ENCODE measurements at regions of chr2 and their contacts with region 1.

Region 1: DNA sequence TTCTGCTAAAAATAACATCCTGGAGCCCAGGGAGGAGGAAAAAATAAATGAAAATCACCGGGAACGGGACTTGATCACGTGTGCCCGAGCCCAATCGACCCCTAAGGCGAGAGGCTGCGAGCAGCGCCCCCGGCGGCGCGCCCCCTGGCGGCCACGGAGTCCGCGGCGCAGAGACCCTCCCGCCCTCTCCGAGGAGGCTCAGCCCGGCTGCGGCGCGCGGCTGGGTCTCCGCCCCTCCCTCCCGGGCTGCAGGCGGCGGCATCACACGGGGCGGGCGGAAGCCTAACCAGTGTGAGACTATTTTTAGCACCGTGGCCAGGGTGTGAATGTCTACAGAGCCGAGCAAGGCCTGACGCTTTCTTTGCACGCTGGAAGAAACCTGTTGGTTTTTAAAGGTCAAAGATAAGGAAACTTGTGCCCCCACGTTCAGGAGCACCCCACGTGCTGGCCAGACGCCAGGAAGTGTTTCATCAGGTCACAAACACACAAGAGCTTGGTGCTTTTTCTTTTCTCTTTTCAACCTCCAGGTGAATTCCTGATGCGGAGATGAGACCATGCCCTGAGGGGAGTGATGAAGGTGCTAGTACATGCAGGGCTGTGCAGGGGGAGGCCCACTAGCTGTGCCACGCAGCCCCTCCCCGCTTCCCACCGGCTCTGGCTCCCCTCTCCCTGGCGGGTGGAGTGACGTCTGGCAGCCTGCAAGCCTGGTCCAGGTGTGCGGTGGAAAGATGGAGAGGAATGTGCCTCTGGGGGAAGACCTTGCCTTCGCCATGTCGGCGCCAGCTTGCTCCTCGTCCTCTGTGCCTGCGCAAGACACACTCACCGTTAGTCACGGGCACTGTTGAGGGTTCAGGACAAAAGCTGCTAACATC is 35.3 kb upstream of the DNMT3A start:
- DNase-seq: peak; percentile 90
- ATAC-seq: peak; percentile 98
- H3K4me3 Mint-ChIP-seq: peak overlapping the region; percentile 73
- H3K27ac Mint-ChIP-seq: peak overlapping the region; percentile 90
- H3K4me1 Mint-ChIP-seq: peaks cover 35% of the 10 kb centered on the region
- H3K27me3 Mint-ChIP-seq: no peaks in the 10 kb centered on the region
- CTCF ChIP-seq: no peak

Region 2: DNA sequence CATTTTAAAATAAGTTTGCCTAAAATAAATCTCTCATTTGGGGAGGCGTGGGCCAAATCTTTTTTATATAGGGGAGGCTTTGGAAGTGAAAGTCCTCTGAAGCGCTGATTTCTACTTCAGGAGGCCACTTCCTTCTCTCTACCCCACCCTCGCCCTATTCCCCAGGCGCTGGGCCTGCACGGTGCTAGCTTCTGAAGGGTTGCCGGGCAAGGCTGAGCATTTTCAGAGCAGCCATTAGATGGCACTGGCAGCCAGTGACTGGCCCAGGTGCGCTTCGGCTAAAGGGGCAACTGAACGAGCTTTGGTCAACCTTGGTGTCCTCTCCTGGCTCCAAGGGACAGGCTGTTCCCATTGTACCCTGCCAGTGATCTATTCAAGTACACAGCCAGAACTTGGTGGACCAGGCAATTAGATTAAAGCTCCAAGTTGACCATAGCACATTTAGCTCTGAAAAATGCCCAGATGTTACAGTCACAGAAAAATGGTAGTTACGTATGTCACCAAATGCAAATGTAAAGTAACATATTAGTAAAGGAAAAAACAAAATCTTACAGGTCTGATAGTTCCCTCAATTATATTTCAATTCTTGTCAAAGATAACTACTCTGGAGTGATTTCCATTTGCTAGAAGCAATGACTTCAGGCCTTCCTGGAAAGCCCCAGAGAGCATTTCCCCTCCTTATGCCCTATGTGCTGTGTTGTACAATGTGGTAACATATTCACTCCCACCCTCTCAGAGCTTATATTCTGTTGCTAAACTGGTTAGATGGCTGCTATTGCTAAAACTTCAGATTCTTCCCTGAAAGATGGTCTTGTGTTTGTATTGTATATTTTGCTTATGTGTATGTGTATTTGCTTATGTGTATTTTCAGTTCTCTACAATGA is 210.8 kb before region 1 on chr2:
- CTCF ChIA-PET with region 1: interaction called, 7 read pairs
- POLR2A ChIA-PET with region 1: no interaction called
- intact Hi-C with region 1: loop called (anchors 1 kb)
- DNase-seq: peak; percentile 71
- ATAC-seq: peak; percentile 95
- H3K4me3 Mint-ChIP-seq: peak overlapping the region; percentile 38
- H3K27ac Mint-ChIP-seq: peak overlapping the region; percentile 65
- H3K4me1 Mint-ChIP-seq: peaks cover 33% of the 10 kb centered on the region
- H3K27me3 Mint-ChIP-seq: peaks cover 23% of the 10 kb centered on the region
- CTCF ChIP-seq: peak; percentile 20

Region 3: GRCh38 chr2:25309402-25309801 is 67.6 kb before region 1 on chr2:
- CTCF ChIA-PET with region 1: interaction called, 4 read pairs
- POLR2A ChIA-PET with region 1: no interaction called
- intact Hi-C with region 1: loop called (anchors 2 kb)
- DNase-seq: peak; percentile 46
- ATAC-seq: peak; percentile 71
- H3K4me3 Mint-ChIP-seq: no peak overlapping the region
- H3K27ac Mint-ChIP-seq: no peak overlapping the region
- H3K4me1 Mint-ChIP-seq: peaks cover 16% of the 10 kb centered on the region
- H3K27me3 Mint-ChIP-seq: no peaks in the 10 kb centered on the region
- CTCF ChIP-seq: no peak

Region 4: GRCh38 chr2:25388491-25388890 is 11.5 kb after region 1 on chr2:
- CTCF ChIA-PET with region 1: interaction called, 5 read pairs
- POLR2A ChIA-PET with region 1: interaction called, 20 read pairs
- intact Hi-C with region 1: loop called (anchors 1 kb)
- DNase-seq: no peak
- ATAC-seq: peak; percentile 90
- H3K4me3 Mint-ChIP-seq: peak overlapping the region; percentile 75
- H3K27ac Mint-ChIP-seq: peak overlapping the region; percentile 74
- H3K4me1 Mint-ChIP-seq: peaks cover 30% of the 10 kb centered on the region
- H3K27me3 Mint-ChIP-seq: no peaks in the 10 kb centered on the region
- CTCF ChIP-seq: no peak

Region 5: GRCh38 chr2:25411281-25411680 is 34.3 kb after region 1 on chr2:
- CTCF ChIA-PET with region 1: interaction called, 9 read pairs
- POLR2A ChIA-PET with region 1: interaction called, 23 read pairs
- intact Hi-C with region 1: no loop called
- DNase-seq: no peak
- ATAC-seq: peak; percentile 50
- H3K4me3 Mint-ChIP-seq: peak overlapping the region; percentile 71
- H3K27ac Mint-ChIP-seq: peak overlapping the region; percentile 87
- H3K4me1 Mint-ChIP-seq: peaks cover 71% of the 10 kb centered on the region
- H3K27me3 Mint-ChIP-seq: no peaks in the 10 kb centered on the region
- CTCF ChIP-seq: no peak

Region 6: DNA sequence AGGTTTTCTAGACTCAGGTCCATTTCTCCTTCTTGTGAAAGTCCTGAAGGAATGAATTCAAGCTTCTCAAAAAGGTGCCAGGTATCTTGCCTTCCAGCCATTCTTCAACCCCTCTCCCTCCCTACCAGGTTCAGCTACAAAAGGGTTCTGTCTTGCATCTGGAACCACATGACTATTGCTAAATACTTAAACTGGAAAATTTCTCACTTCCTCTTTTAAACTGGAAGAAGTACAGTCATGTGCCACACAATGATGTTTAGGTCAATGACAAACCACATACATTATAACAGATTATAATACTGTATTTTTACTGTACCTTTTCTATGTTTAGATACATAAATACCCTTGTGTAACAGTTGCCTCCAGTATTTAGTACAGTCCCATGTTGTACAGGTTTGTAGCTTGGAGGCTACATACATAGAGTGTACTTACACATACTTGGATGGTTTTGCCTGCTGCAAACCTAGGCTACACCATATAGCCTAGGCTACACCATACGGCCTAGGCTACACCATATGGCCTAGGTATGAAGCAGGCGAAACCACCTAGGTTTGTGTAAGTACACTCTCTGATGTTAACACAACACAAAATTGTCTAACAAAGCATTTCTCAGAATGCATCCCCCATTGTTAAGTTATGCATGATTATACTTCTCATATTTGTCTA is 106.7 kb after region 1 on chr2:
- CTCF ChIA-PET with region 1: no interaction called
- POLR2A ChIA-PET with region 1: interaction called, 4 read pairs
- intact Hi-C with region 1: loop called (anchors 1 kb)
- DNase-seq: no peak
- ATAC-seq: peak; percentile 83
- H3K4me3 Mint-ChIP-seq: peak overlapping the region; percentile 45
- H3K27ac Mint-ChIP-seq: peak overlapping the region; percentile 59
- H3K4me1 Mint-ChIP-seq: peaks cover 43% of the 10 kb centered on the region
- H3K27me3 Mint-ChIP-seq: no peaks in the 10 kb centered on the region
- CTCF ChIP-seq: no peak

Region 7: GRCh38 chr2:25521665-25522387 is 144.8 kb after region 1 on chr2:
- CTCF ChIA-PET with region 1: interaction called, 6 read pairs
- POLR2A ChIA-PET with region 1: no interaction called
- intact Hi-C with region 1: loop called (anchors 1 kb)
- DNase-seq: no peak
- ATAC-seq: peak; percentile 97
- H3K4me3 Mint-ChIP-seq: peak overlapping the region; percentile 7
- H3K27ac Mint-ChIP-seq: peak overlapping the region; percentile 38
- H3K4me1 Mint-ChIP-seq: peaks cover 23% of the 10 kb centered on the region
- H3K27me3 Mint-ChIP-seq: no peaks in the 10 kb centered on the region
- CTCF ChIP-seq: no peak